Left colon (tissue), 2 donors: ENCODE measurements at regions of chr13 and their contacts with region 1.

Region 1: DNA sequence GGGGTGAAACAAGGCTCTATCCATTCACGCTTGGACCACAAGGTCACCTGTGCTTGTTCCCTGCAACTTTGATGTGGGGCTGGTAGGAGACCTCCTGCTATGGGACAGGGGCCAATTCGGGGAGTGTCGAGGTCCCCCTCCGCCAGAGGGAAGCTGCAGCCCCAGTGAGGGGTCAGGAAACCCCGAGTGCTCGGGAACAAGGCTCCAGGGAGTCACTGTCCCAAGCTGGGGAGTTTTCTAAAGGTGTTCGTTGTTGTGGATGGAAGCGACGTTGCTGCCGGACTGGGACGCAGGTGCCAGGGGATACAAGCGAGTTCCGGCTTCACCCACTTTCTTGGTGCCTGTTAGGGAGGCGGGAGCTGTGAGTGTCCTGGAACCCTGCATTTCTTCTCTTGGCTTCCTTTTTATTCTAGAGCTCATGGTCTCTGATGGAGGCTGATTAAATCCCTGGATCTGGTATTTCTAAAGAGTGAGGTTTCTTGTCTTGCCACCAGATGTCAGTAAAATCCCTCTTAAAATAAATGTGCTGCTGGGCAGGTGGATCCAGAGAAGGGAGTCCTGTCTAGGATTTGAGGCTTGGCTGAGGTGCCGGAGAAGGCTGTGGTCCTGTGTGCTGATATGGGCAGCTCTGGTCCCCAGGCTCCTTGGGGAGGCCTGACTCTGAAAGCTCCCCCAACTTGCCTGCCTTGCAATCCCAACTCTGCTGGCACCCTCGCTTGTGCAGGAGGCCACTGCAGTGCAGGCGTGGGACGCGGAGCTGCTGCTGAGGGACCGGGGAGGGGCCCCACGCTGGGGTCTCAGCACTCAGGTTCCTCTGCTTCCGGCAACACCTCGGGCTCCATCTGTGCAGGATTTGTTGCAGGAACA is 153.9 kb downstream of the TEX29 start:
- DNase-seq: no peak
- ATAC-seq: peak; percentile 61

Region 2: DNA sequence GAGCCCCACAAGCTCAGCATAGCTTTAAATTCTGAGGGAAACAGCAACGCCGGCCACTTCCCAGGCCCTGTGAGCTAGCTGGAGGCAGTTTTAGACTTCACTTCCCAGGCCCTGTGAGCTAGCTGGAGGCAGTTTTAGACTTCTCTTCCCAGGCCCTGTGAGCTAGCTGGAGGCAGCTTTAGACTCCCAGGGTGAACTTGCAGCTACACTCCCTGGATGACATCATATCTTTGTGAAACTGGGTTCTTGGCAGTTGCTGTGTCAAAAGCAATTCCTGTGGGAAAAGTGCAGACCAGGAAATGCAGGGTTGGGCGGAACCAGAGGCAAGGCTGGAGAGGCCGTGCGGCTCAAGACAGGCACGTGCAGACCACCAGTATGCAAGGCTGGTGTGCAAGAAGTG is 605.3 kb after region 1 on chr13:
- intact Hi-C with region 1: no loop called
- DNase-seq: no peak
- ATAC-seq: peak; percentile 48

Region 3: DNA sequence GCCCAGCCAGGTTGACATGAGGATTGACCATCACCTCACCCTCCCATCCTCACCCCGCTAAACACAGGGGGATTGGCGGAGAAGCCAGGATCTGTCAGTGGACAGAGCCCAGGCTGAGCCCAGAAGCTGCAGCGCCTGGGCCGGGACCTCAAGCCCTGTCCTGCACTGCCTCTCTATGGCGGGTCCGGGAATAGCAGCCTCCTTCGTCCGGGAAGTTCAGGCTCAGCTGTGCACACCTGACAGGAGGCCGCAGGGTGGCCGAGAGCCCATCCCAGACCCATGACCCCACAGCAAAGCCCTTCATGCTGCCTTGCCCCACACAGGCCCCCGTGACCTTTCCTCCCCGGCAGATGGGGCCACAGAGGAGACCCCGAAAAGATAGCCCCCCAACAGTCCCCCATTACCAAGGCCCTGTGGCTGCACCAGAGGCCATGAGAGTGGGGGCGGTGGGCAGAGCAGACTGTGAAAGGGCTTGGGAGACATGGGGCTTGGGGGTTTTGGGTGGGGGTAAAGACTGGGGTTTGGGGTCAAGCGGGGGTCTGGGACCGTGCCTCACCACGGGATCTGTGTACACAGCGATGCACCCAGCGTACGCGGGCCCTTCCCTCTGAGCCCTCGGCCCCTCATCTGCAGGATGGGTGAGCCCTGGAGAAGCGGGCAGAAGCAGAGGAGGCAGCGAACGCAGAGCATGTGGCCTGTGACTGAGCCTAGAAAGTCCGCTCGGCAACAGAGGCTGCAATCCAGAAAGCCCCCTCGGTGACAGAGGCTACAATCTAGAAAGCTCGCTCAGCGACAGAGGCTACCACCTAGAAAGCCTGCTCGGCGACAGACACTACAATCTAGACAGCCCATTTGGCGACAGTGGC is 969.9 kb after region 1 on chr13:
- intact Hi-C with region 1: loop called (anchors 5 to 10 kb)
- DNase-seq: peak in 1 of 2 donors; percentile 68
- ATAC-seq: peak; percentile 95